ENCODE measurements at regions of chr11 and their contacts with region 1.

Region 1: GRCh38 chr11:335779-336658 is 15.4 kb upstream of the IFITM3 start:
- DNase-seq: no peak
- H3K4me3 ChIP-seq: no peak overlapping the region
- H3K27ac ChIP-seq: no peak overlapping the region
- H3K4me1 ChIP-seq: no peaks in the 10 kb centered on the region
- H3K27me3 ChIP-seq: 0 out of 2 replicates have a peak, but pooled peaks cover 3% of the 10 kb centered on the region
- CTCF ChIP-seq: no peak

Region 2: DNA sequence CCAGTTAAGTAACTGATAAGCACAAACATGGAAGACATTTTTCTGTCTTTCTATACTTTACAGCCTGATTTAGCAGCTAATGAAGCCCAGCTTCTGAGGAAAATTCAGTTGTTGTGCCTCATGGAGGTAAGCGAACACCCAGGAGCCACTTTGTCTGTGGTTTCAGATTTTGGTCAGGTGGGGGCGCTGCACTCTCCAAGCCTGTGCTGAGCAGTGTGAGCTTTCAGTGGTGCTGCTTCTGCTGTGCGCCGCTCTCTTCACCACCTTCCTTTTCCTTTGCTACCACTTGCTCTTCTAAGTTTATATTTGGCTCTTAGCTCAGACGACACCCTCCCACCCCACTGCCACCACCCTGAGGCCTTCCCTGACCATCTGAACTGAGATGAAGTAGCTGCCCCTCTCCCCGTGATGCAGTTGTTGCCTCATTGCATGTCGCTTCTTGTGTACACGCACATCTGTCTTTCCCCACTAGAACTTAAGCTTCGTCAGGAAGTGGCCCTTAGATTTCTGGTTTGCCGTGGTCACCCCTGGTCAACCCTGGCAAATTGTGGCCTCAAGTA is 85.2 kb before region 1 on chr11:
- CTCF ChIA-PET with region 1: interaction called, 10 read pairs
- POLR2A ChIA-PET with region 1: no interaction called
- intact Hi-C with region 1: no loop called
- DNase-seq: peak in 1 of 2 experiments; percentile 51
- H3K4me3 ChIP-seq: no peak overlapping the region
- H3K27ac ChIP-seq: no peak overlapping the region
- H3K4me1 ChIP-seq: no peaks in the 10 kb centered on the region
- H3K27me3 ChIP-seq: no peaks in the 10 kb centered on the region
- CTCF ChIP-seq: peak; percentile 67

Measured in PC-9 (cell line).